GM12878 (cell line): ENCODE measurements at regions of chr12 and their contacts with region 1.

Region 1: DNA sequence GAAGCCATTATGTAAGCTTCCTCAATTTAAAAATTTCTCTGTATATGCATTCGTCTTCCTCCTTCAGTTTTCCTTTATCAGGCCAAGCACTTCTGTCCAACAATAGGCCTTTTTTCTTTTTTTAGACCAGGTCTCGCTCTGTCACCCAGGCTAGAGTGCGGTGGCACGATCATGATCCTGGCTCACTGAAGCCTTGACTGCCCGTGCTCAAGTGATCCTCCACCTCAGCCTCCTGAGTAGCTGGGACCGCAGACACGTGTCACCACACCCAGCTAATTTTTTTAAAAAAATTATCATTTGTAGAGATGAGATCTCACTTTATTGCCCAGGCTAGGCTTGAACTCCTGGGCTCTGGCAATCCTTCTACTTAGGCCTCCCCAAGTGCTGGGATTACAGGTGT is 25.8 kb downstream of the TAOK3 start:
- DNase-seq: no peak
- ATAC-seq: peak; percentile 89
- H3K4me3 ChIP-seq: no peak overlapping the region; the same call in 1 of the 2 replicates
- H3K27ac ChIP-seq: peak overlapping the region; percentile 21
- H3K4me1 ChIP-seq: peaks cover 21% of the 10 kb centered on the region; the same call in 1 of the 2 replicates
- H3K27me3 ChIP-seq: no peaks in the 10 kb centered on the region
- CTCF ChIP-seq: no peak
- EP300 ChIP-seq: no peak
- POLR2A ChIP-seq: no peak
- RAD21 ChIP-seq: no peak

Region 2: GRCh38 chr12:118302066-118302465 is 44.8 kb before region 1 on chr12:
- CTCF ChIA-PET with region 1: interaction called, 26 read pairs
- POLR2A ChIA-PET with region 1: interaction called, 28 read pairs
- RAD21 ChIA-PET with region 1: interaction called, 33 read pairs
- SMC1A ChIA-PET with region 1: interaction called, 16 read pairs
- in situ Hi-C with region 1: no loop called
- intact Hi-C with region 1: no loop called
- DNase-seq: no peak
- ATAC-seq: peak; percentile 45
- H3K4me3 ChIP-seq: no peak overlapping the region
- H3K27ac ChIP-seq: peak overlapping the region; percentile 48; the same call in 1 of the 2 replicates
- H3K4me1 ChIP-seq: peaks cover 29% of the 10 kb centered on the region
- H3K27me3 ChIP-seq: no peaks in the 10 kb centered on the region
- CTCF ChIP-seq: no peak
- EP300 ChIP-seq: no peak
- POLR2A ChIP-seq: no peak
- RAD21 ChIP-seq: no peak

Region 3: GRCh38 chr12:118307069-118307954 is 39.6 kb before region 1 on chr12:
- CTCF ChIA-PET with region 1: interaction called, 21 read pairs
- POLR2A ChIA-PET with region 1: interaction called, 28 read pairs
- RAD21 ChIA-PET with region 1: interaction called, 33 read pairs
- SMC1A ChIA-PET with region 1: interaction called, 70 read pairs
- in situ Hi-C with region 1: no loop called
- intact Hi-C with region 1: no loop called
- DNase-seq: peak; percentile 69
- ATAC-seq: peak; percentile 78
- H3K4me3 ChIP-seq: peak overlapping the region; percentile 64
- H3K27ac ChIP-seq: peak overlapping the region; percentile 98
- H3K4me1 ChIP-seq: peaks cover 38% of the 10 kb centered on the region
- H3K27me3 ChIP-seq: no peaks in the 10 kb centered on the region
- CTCF ChIP-seq: no peak
- EP300 ChIP-seq: no peak; a peak in 1 of 4 replicates
- POLR2A ChIP-seq: no peak
- RAD21 ChIP-seq: no peak

Region 4: DNA sequence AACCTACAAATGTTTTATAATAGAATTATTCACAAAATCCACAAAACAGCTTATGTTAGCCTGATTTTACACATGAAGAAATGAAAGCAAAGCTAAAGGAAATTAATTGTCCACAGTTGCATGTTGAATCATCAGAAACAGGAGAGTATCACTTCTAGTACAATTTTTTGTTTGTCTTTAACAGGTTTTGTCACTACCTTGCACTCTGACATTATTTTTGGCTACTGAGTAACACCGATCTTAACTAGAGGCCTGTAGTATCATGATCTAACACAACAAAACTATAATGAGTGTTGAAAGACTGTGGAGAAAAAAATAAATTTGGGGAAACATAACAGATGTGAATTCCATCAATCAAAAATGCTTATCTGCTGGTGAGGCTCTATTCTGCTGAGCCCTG is 34.3 kb before region 1 on chr12:
- CTCF ChIA-PET with region 1: interaction called, 21 read pairs
- POLR2A ChIA-PET with region 1: interaction called, 28 read pairs
- RAD21 ChIA-PET with region 1: interaction called, 33 read pairs
- SMC1A ChIA-PET with region 1: interaction called, 70 read pairs
- in situ Hi-C with region 1: no loop called
- intact Hi-C with region 1: no loop called
- DNase-seq: peak; percentile 73
- ATAC-seq: peak; percentile 87
- H3K4me3 ChIP-seq: peak overlapping the region; percentile 47; the same call in 1 of the 2 replicates
- H3K27ac ChIP-seq: peak overlapping the region; percentile 82
- H3K4me1 ChIP-seq: peaks cover 40% of the 10 kb centered on the region
- H3K27me3 ChIP-seq: no peaks in the 10 kb centered on the region
- CTCF ChIP-seq: no peak
- EP300 ChIP-seq: peak in 1 of 2 experiments; percentile 38; a peak in 2 of 4 replicates
- POLR2A ChIP-seq: no peak
- RAD21 ChIP-seq: no peak

Region 5: GRCh38 chr12:118330421-118331018 is 16.4 kb before region 1 on chr12:
- CTCF ChIA-PET with region 1: interaction called, 6 read pairs
- POLR2A ChIA-PET with region 1: interaction called, 8 read pairs
- RAD21 ChIA-PET with region 1: interaction called, 10 read pairs
- SMC1A ChIA-PET with region 1: interaction called, 44 read pairs
- in situ Hi-C with region 1: no loop called
- intact Hi-C with region 1: no loop called
- DNase-seq: no peak
- ATAC-seq: peak; percentile 93
- H3K4me3 ChIP-seq: no peak overlapping the region
- H3K27ac ChIP-seq: peak overlapping the region; percentile 71
- H3K4me1 ChIP-seq: peaks cover 20% of the 10 kb centered on the region
- H3K27me3 ChIP-seq: no peaks in the 10 kb centered on the region
- CTCF ChIP-seq: no peak
- EP300 ChIP-seq: no peak
- POLR2A ChIP-seq: no peak
- RAD21 ChIP-seq: no peak